Activated CD8-positive, alpha-beta memory T cell treated with anti-CD3 and anti-CD28 coated beads, Interleukin-2, amount 10 ng/mL, durations not matched to agents 7 days and 5 days (primary cell): ENCODE measurements at regions of chr22 and their contacts with region 1.

Region 1: GRCh38 chr22:37658133-37659065 is at the start of gene PDXP:
- DNase-seq: peak; percentile 99
- ATAC-seq: peak; percentile 98
- H3K4me3 Mint-ChIP-seq: peak within 1 kb of the TSS; percentile 85
- H3K27ac Mint-ChIP-seq: peak within 1 kb of the TSS; percentile 88
- H3K4me1 Mint-ChIP-seq: peaks cover 39% of the 10 kb centered on the region
- H3K27me3 Mint-ChIP-seq: no peaks in the 10 kb centered on the region
- total RNA-seq, gene PDXP: 25.9 to 32.6 TPM

Region 2: DNA sequence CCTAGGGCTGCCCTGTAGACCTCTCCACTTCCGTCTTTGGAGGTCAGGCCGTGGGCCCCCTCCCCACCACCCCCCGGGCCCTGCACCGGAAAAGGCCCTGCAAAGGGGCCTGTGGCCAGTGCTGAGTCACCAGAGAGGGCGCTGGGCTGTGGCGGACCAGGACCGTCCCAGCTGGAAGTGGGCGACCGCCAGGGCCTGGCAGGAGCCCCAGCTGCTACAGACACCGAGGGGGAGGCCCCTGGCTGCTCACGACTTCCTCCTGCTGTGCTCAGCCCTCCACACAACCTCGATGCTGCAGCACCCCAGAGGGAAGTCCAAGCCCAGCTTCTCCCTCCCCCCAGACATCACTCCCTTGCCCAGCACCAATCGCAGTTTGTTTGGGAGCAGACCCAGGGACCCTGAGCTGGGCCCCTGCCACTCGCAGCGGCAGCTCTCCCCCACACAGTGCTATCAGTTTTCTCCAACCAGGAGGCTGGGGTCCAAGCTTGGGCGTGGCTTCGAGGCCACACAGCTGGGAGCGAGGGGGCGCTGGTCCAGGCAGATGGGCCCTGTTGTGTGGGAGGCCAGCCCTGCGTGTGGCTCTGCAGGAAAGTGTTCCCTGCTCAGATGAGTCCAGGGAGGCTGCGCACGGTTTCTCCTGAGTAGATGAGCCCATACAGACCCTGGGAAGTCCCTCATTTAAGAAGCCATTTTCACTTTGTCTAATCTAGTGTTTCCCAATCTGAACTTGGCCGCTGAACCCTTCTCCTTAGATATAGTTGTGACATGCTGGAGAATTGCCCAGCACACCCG is 24.6 kb before region 1 on chr22:
- CTCF ChIA-PET with region 1: interaction called, 1,064 read pairs
- DNase-seq: peak; percentile 89
- ATAC-seq: peak; percentile 60
- H3K4me3 Mint-ChIP-seq: peak overlapping the region; percentile 72
- H3K27ac Mint-ChIP-seq: peak overlapping the region; percentile 91
- H3K4me1 Mint-ChIP-seq: peaks cover 74% of the 10 kb centered on the region
- H3K27me3 Mint-ChIP-seq: no peaks in the 10 kb centered on the region

Region 3: DNA sequence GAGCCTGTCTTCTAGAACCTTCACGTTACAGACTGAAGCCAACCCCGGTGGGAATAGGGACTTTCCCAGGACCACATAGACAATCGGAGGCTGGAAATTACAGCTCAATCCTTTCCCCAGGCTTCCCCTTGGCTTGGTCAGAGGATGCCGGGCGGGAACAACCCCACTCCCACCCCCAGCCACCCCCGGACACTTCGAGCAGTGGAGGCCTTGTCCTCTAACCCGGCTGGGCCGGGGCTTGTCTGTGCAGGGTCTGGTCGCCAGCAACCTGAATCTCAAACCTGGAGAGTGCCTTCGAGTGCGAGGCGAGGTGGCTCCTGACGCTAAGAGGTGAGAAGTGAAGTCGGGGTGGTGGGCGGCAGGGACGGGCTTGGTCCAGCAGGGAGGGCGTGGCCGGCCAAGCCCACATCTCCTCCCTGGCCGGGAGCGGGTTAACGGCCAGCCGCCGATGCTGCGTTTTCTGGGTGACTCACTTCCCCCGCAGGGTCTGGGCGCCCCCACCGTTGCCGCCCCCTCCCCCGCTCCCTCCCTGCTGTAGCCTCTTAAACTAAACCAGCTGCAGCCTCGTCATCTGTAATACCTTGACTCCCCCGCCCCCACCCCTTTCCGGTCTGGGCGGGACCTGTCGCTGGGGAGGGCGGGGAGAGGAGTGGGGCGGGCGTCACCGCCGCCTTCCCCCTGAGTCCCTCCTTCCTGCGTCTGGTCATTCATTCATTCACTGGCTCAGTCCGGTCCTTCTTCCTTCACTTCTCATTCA is 18.5 kb after region 1 on chr22:
- CTCF ChIA-PET with region 1: interaction called, 184 read pairs
- DNase-seq: peak; percentile 96
- ATAC-seq: peak; percentile 70
- H3K4me3 Mint-ChIP-seq: peak overlapping the region; percentile 83
- H3K27ac Mint-ChIP-seq: peak overlapping the region; percentile 97
- H3K4me1 Mint-ChIP-seq: peaks cover 64% of the 10 kb centered on the region
- H3K27me3 Mint-ChIP-seq: no peaks in the 10 kb centered on the region

Region 4: GRCh38 chr22:37686002-37686982 is 27.9 kb after region 1 on chr22 and contains the start of gene NOL12:
- CTCF ChIA-PET with region 1: interaction called, 184 read pairs
- DNase-seq: peak; percentile 85
- ATAC-seq: peak; percentile 92
- H3K4me3 Mint-ChIP-seq: peak within 1 kb of the TSS; percentile 82
- H3K27ac Mint-ChIP-seq: peak within 1 kb of the TSS; percentile 90
- H3K4me1 Mint-ChIP-seq: peaks cover 27% of the 10 kb centered on the region
- H3K27me3 Mint-ChIP-seq: no peaks in the 10 kb centered on the region
- total RNA-seq, gene NOL12: 49.9 to 53.3 TPM